CD8-positive, alpha-beta memory T cell (primary cell): ENCODE measurements at regions of chr2 and their contacts with region 1.

Region 1: GRCh38 chr2:172086241-172087206 is 1.2 kb downstream of the DLX1 start:
- DNase-seq: peak; percentile 45 to 71 (median 55)
- H3K4me3 ChIP-seq: no peak overlapping the region
- H3K4me3 Mint-ChIP-seq: peak overlapping the region; percentile 61 to 92 (median 80)
- H3K27ac ChIP-seq: no peak overlapping the region
- H3K27ac Mint-ChIP-seq: peak overlapping the region in 6 of 8 donors; percentile 52 to 92 (median 78)
- H3K4me1 ChIP-seq: peaks cover 57% of the 10 kb centered on the region
- H3K4me1 Mint-ChIP-seq: peaks cover 48 to 61% (median 59%) of the 10 kb centered on the region in 3 donors
- H3K27me3 ChIP-seq: peaks cover 99% of the 10 kb centered on the region
- H3K27me3 Mint-ChIP-seq: peaks cover 98% of the 10 kb centered on the region in 2 donors

Region 2: GRCh38 chr2:172066394-172066886 is 20.1 kb before region 1 on chr2:
- CTCF ChIA-PET with region 1: no interaction called
- POLR2A ChIA-PET with region 1: no interaction called
- DNase-seq: no peak
- H3K4me3 ChIP-seq: no peak overlapping the region
- H3K4me3 Mint-ChIP-seq: no peak overlapping the region
- H3K27ac ChIP-seq: no peak overlapping the region
- H3K27ac Mint-ChIP-seq: no peak overlapping the region
- H3K4me1 ChIP-seq: no peaks in the 10 kb centered on the region
- H3K4me1 Mint-ChIP-seq: no peaks in the 10 kb centered on the region
- H3K27me3 ChIP-seq: no peaks in the 10 kb centered on the region
- H3K27me3 Mint-ChIP-seq: peaks cover 2 to 6% of the 10 kb centered on the region in 2 donors

Region 3: GRCh38 chr2:172102391-172103278 is 16.1 kb after region 1 on chr2 and contains the start of gene DLX2:
- CTCF ChIA-PET with region 1: interaction called, 11 read pairs
- POLR2A ChIA-PET with region 1: interaction called, 6 read pairs
- DNase-seq: peak in 4 of 5 donors; percentile 50 to 75 (median 62)
- H3K4me3 ChIP-seq: peak within 1 kb of the TSS; percentile 58
- H3K4me3 Mint-ChIP-seq: peak within 1 kb of the TSS; percentile 80 to 93 (median 85)
- H3K27ac ChIP-seq: no peak within 1 kb of the TSS
- H3K27ac Mint-ChIP-seq: peak within 1 kb of the TSS; percentile 5 to 90 (median 80)
- H3K4me1 ChIP-seq: peaks cover 63% of the 10 kb centered on the region
- H3K4me1 Mint-ChIP-seq: peaks cover 44 to 66% (median 55%) of the 10 kb centered on the region in 3 donors
- H3K27me3 ChIP-seq: peaks cover 93% of the 10 kb centered on the region
- H3K27me3 Mint-ChIP-seq: peaks cover 71 to 86% of the 10 kb centered on the region in 2 donors
- total RNA-seq, gene DLX2: 0.16 TPM in 1 of 2 experiments, not detected in the other